ENCODE measurements at regions of chr9 and their contacts with region 1.

Region 1: DNA sequence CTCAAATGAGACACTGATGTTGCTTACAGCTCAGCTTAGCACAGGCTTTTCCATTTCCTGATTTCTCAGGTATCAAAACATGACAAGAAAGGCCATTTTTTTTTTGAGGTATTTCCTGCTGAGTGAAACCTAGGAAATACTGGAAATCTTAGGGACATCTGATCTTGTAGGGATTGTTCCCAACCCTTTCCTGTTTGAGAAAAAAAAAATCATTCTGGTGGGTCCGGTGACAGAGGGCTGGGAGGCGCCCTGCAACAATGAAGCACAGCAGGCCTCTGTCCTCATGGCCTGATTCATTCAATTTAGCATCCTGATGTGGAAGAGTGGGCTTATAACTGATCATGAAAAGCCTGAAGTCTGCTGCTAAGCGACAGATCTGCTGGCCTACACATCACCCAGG is 3.0 kb upstream of the C9orf153 start:
- DNase-seq: no peak
- ATAC-seq: no peak
- H3K4me3 ChIP-seq: no peak overlapping the region
- H3K4me3 Mint-ChIP-seq: no peak overlapping the region
- H3K27ac ChIP-seq: no peak overlapping the region
- H3K27ac Mint-ChIP-seq: no peak overlapping the region
- H3K4me1 ChIP-seq: no peaks in the 10 kb centered on the region
- H3K4me1 Mint-ChIP-seq: no peaks in the 10 kb centered on the region
- H3K27me3 ChIP-seq: no peaks in the 10 kb centered on the region
- H3K27me3 Mint-ChIP-seq: no peaks in the 10 kb centered on the region
- CTCF ChIP-seq: no peak

Region 2: DNA sequence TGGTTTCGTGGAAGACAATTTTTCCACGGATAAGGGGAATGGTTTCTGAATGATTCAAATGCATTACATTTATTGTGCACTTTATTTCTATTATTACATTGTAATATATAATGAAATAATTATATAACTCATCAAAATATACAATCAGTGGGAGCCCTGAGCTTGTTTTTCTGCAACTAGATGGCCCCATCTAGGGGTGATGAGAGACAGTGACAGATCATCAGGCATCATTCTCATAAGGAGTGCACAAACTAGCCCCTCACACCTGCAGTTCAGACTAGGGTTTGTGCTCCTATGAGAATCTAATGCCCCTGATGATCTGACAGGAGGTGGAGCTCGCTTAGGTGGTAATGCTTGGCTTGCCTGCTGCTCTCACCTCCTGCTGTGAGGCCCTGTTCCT is 13.5 kb after region 1 on chr9:
- CTCF ChIA-PET with region 1: no interaction called
- POLR2A ChIA-PET with region 1: interaction called, 12 read pairs
- intact Hi-C with region 1: no loop called
- DNase-seq: no peak
- ATAC-seq: no peak
- H3K4me3 ChIP-seq: no peak overlapping the region
- H3K4me3 Mint-ChIP-seq: no peak overlapping the region
- H3K27ac ChIP-seq: no peak overlapping the region
- H3K27ac Mint-ChIP-seq: no peak overlapping the region
- H3K4me1 ChIP-seq: no peaks in the 10 kb centered on the region
- H3K4me1 Mint-ChIP-seq: peaks cover 12% of the 10 kb centered on the region
- H3K27me3 ChIP-seq: no peaks in the 10 kb centered on the region
- H3K27me3 Mint-ChIP-seq: no peaks in the 10 kb centered on the region
- CTCF ChIP-seq: no peak